ENCODE measurements at regions of chr19 and their contacts with region 1.

Region 1: GRCh38 chr19:43622070-43622469 is 2.6 kb upstream of the ZNF428 start:
- DNase-seq: no peak
- H3K4me3 Mint-ChIP-seq: no peak overlapping the region
- H3K27ac Mint-ChIP-seq: no peak overlapping the region
- H3K4me1 Mint-ChIP-seq: peaks cover 13% of the 10 kb centered on the region
- H3K27me3 Mint-ChIP-seq: no peaks in the 10 kb centered on the region
- CTCF ChIP-seq: no peak

Region 2: DNA sequence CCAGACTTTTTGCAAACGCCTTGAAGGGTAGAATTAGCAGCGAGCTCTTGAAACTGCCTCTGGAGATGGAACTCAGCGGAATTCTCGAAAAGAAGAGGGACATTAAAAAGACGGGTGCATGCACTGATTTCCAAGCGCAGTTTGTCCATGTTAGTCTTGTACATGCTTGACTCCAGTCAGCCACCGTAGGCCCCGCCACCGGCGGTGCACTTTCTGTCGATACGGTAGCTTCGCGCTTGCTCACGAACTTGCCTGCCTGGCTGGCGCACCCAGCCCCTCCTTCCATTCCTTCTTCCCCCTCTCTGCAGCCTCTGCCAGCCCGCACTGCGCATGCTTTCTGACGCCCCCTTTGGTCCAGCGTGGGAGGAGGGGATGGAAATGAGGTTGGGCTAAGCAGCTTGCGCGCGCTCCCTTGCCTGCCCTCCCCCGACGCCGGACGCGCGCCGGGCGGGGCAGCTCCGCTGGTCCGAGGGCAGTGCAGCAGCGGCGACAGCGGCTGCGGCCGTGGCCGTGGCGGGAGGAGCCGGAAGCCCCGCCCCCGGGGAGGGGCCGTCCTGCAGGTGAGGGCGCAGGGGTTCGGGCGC is 89.0 kb before region 1 on chr19 and contains the start of gene ZNF575:
- CTCF ChIA-PET with region 1: interaction called, 12 read pairs
- intact Hi-C with region 1: no loop called
- DNase-seq: peak; percentile 96
- H3K4me3 Mint-ChIP-seq: peak within 1 kb of the TSS; percentile 79
- H3K27ac Mint-ChIP-seq: peak within 1 kb of the TSS; percentile 68
- H3K4me1 Mint-ChIP-seq: no peaks in the 10 kb centered on the region
- H3K27me3 Mint-ChIP-seq: no peaks in the 10 kb centered on the region
- CTCF ChIP-seq: no peak
- total RNA-seq, gene ZNF575: 2.2 and 2.8 TPM in 2 replicates

Region 3: DNA sequence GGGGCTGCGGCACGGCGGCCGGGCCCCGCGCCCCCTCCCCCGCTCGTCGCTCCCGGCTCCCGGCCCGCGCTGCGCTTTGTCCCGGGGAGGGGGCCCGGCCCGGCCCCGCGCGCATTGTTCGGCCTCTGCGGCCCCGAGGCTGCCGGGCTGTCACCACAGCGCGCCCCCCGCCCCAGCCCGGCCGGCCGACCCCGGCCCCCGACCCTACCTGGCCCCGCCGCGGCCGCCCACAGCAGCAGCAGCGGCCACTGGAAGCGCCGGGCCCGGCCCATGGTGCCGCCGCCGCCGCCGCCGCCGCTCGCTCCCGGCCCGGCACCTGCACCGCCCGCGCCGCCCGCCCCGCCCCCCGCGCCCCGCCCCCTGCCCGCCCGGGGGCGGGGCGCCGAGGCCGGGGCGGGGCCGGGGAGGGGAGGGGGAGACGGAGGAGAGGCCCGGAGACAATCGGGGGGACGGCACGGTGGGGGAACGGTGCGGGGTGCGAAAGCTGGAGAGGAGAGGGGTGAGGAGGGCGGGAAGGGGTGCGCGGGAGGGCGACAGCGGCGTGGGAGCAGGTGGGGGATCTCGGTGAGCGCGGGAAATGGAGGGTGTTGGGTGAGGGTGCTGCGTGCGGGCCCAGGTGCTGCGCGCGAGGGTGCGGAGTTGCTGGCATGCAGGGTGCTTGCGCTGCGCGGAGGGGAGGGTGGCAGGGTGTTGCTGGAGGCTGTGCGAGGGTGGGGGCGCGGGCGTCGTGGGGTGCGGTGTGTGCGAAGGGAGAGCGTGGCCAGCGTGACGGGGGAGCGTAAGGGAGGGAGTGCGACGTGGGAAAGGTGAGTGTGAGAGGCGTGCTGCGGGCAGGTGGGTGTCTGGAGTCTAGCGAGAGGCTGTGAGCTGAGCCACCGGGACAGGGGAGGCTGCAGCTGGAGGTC is 17.7 kb after region 1 on chr19 and contains the start of gene CADM4:
- CTCF ChIA-PET with region 1: no interaction called
- intact Hi-C with region 1: no loop called
- DNase-seq: peak; percentile 45
- H3K4me3 Mint-ChIP-seq: peak within 1 kb of the TSS; percentile 74
- H3K27ac Mint-ChIP-seq: peak within 1 kb of the TSS; percentile 70
- H3K4me1 Mint-ChIP-seq: peaks cover 25% of the 10 kb centered on the region
- H3K27me3 Mint-ChIP-seq: peaks cover 45% of the 10 kb centered on the region
- CTCF ChIP-seq: no peak
- total RNA-seq, gene CADM4: 14.5 and 17.5 TPM in 2 replicates

Region 4: GRCh38 chr19:43692877-43693276 is 70.8 kb after region 1 on chr19:
- CTCF ChIA-PET with region 1: no interaction called
- intact Hi-C with region 1: no loop called
- DNase-seq: no peak
- H3K4me3 Mint-ChIP-seq: no peak overlapping the region
- H3K27ac Mint-ChIP-seq: peak overlapping the region; percentile 64
- H3K4me1 Mint-ChIP-seq: peaks cover 9% of the 10 kb centered on the region
- H3K27me3 Mint-ChIP-seq: no peaks in the 10 kb centered on the region
- CTCF ChIP-seq: no peak